ENCODE measurements at regions of chr7 and their contacts with region 1.

Region 1: DNA sequence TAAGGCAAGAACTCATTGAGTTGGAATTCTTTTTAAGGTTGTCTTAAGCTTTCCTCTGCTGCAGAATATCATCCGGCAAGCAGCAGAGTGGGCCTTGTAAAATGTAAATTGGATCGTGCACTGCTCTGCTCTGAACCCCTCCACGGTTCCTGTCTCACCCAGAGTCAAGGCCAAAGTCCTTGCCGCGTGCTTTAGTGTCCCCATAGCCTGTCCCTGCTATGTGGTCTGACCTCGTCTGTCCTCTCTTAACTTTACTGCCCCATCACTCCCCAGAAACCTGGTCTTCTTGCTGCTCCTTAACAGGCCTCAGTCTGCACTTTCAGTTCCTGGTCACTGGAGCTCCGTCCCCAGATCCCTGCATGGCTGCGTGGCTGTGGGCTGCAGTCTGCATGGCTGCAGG is 121.6 kb upstream of the SDK1 start:
- DNase-seq: peak in 1 of 5 donors; percentile 14
- H3K4me3 ChIP-seq: no peak overlapping the region
- H3K27ac ChIP-seq: no peak overlapping the region
- H3K4me1 ChIP-seq: no peaks in the 10 kb centered on the region
- H3K27me3 ChIP-seq: no peaks in the 10 kb centered on the region
- CTCF ChIP-seq: no peak
- EP300 ChIP-seq: no peak
- POLR2A ChIP-seq: no peak

Region 2: DNA sequence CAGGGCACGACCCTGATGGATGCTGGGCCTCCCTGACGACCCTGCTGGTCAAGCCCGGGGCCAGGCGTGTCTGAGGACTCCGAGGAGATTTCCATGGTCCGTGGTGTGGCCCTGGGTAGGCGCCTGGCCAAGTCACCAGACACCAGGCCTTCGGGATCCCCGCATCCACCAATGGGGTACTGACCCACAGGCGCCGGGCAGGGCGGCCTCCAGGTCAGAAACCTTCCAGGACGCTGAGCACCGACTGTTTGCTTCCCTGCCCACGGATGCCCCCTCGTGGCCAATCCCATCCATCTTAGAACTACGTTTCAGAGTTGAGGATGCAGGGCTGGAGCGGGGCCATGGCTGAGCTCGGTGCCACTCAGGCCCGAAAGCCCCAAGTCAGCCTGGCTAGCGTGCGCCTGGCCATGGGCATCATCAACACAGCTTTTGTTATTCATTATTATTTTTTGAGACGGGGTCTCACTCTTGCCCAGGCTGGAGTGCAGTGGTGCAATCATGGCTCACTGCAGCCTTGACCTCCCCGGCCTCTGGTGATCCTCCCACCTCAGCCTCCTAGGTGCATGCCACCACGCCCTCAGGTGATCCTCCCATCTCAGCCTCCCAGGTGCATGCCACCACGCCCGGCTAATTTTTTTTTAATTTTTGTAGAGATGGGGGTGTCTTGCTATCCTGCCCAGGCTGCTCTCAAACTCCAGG is 498.5 kb before region 1 on chr7:
- intact Hi-C with region 1: no loop called
- DNase-seq: peak; percentile 62 to 83 (median 80)
- H3K4me3 ChIP-seq: no peak overlapping the region
- H3K27ac ChIP-seq: no peak overlapping the region
- H3K4me1 ChIP-seq: no peaks in the 10 kb centered on the region
- H3K27me3 ChIP-seq: no peaks in the 10 kb centered on the region
- CTCF ChIP-seq: peak; percentile 47 to 61 (median 57)
- EP300 ChIP-seq: no peak
- POLR2A ChIP-seq: no peak

Region 3: GRCh38 chr7:3114917-3115316 is 64.5 kb before region 1 on chr7:
- intact Hi-C with region 1: loop called in 1 of 4 experiments (anchors 2 kb)
- DNase-seq: no peak
- H3K4me3 ChIP-seq: no peak overlapping the region
- H3K27ac ChIP-seq: no peak overlapping the region
- H3K4me1 ChIP-seq: no peaks in the 10 kb centered on the region
- H3K27me3 ChIP-seq: no peaks in the 10 kb centered on the region
- CTCF ChIP-seq: no peak
- EP300 ChIP-seq: no peak
- POLR2A ChIP-seq: no peak